ENCODE measurements at regions of chr9 and their contacts with region 1.

Region 1: GRCh38 chr9:86598411-86599239 is 244.4 kb upstream of the TUT7 start:
- DNase-seq: no peak
- H3K4me3 ChIP-seq: no peak overlapping the region
- H3K27ac ChIP-seq: no peak overlapping the region
- H3K4me1 ChIP-seq: no peaks in the 10 kb centered on the region
- H3K27me3 ChIP-seq: no peaks in the 10 kb centered on the region
- CTCF ChIP-seq: no peak
- EP300 ChIP-seq: no peak
- POLR2A ChIP-seq: no peak

Region 2: DNA sequence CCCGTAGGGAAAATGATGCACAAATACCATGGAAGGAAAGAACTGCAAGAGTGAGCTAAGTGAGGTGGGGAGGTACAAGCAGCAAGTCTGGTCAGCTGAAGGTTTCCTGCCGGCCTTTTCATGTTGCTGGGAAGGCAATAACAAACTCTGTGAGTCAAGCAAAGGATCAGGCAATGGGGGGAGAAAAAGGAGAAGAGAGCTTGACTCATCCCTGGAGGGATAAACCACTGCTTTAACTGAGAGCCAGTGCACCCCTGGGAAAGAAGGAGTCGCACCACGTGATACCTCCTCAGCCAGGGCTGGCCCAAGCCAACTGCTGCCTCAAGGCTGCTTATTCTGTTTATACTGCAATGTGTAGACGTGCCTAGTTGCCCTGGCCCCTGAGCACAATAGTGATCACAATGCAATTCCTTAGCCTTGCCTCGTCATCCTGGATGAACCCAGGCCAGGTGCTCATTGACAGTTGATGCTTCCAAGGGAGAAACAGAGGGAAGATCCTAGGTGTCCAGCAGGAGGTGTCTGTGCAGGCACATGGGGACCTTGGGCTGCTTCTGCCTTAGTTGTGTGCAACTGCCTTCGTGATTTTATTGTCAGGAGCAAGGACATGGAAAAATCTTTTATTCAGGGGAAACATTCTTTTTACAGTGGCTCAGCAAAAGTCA is 41.4 kb before region 1 on chr9:
- intact Hi-C with region 1: loop called in 1 of 4 experiments (anchors 2 kb)
- DNase-seq: peak in 2 of 5 donors; percentile 22 to 38
- H3K4me3 ChIP-seq: no peak overlapping the region
- H3K27ac ChIP-seq: no peak overlapping the region
- H3K4me1 ChIP-seq: no peaks in the 10 kb centered on the region
- H3K27me3 ChIP-seq: no peaks in the 10 kb centered on the region
- CTCF ChIP-seq: no peak
- EP300 ChIP-seq: no peak
- POLR2A ChIP-seq: no peak

Region 3: GRCh38 chr9:86573886-86574285 is 24.7 kb before region 1 on chr9:
- intact Hi-C with region 1: loop called in 1 of 4 experiments (anchors 1 kb)
- DNase-seq: no peak
- H3K4me3 ChIP-seq: no peak overlapping the region
- H3K27ac ChIP-seq: no peak overlapping the region
- H3K4me1 ChIP-seq: no peaks in the 10 kb centered on the region
- H3K27me3 ChIP-seq: no peaks in the 10 kb centered on the region
- CTCF ChIP-seq: no peak
- EP300 ChIP-seq: no peak
- POLR2A ChIP-seq: no peak

Region 4: GRCh38 chr9:87127978-87128614 is 529.5 kb after region 1 on chr9:
- intact Hi-C with region 1: no loop called
- DNase-seq: no peak
- H3K4me3 ChIP-seq: no peak overlapping the region
- H3K27ac ChIP-seq: no peak overlapping the region
- H3K4me1 ChIP-seq: peaks cover 2% of the 10 kb centered on the region
- H3K27me3 ChIP-seq: no peaks in the 10 kb centered on the region
- CTCF ChIP-seq: no peak
- EP300 ChIP-seq: no peak
- POLR2A ChIP-seq: no peak

Measured in ovary (tissue), 10 donors.